GM12878 (cell line): ENCODE measurements at regions of chr15 and their contacts with region 1.

Region 1: GRCh38 chr15:98954411-98954810 is 53.2 kb downstream of the PGPEP1L start:
- DNase-seq: peak; percentile 24
- ATAC-seq: no peak
- H3K4me3 ChIP-seq: no peak overlapping the region
- H3K27ac ChIP-seq: no peak overlapping the region
- H3K4me1 ChIP-seq: peaks cover 25% of the 10 kb centered on the region
- H3K27me3 ChIP-seq: no peaks in the 10 kb centered on the region
- CTCF ChIP-seq: no peak
- EP300 ChIP-seq: no peak
- POLR2A ChIP-seq: no peak
- RAD21 ChIP-seq: no peak

Region 2: GRCh38 chr15:98937413-98938104 is 16.9 kb before region 1 on chr15:
- CTCF ChIA-PET with region 1: interaction called, 12 read pairs
- POLR2A ChIA-PET with region 1: interaction called, 11 read pairs
- RAD21 ChIA-PET with region 1: interaction called, 33 read pairs
- SMC1A ChIA-PET with region 1: interaction called, 59 read pairs
- in situ Hi-C with region 1: no loop called
- intact Hi-C with region 1: loop called (anchors 1 kb)
- DNase-seq: peak; percentile 44
- ATAC-seq: peak; percentile 88
- H3K4me3 ChIP-seq: no peak overlapping the region; the same call in 1 of the 2 replicates
- H3K27ac ChIP-seq: peak overlapping the region; percentile 35
- H3K4me1 ChIP-seq: peaks cover 19% of the 10 kb centered on the region
- H3K27me3 ChIP-seq: no peaks in the 10 kb centered on the region
- CTCF ChIP-seq: no peak
- EP300 ChIP-seq: peak; percentile 28 to 47; a peak in 1 of 4 replicates
- POLR2A ChIP-seq: no peak
- RAD21 ChIP-seq: no peak

Region 3: DNA sequence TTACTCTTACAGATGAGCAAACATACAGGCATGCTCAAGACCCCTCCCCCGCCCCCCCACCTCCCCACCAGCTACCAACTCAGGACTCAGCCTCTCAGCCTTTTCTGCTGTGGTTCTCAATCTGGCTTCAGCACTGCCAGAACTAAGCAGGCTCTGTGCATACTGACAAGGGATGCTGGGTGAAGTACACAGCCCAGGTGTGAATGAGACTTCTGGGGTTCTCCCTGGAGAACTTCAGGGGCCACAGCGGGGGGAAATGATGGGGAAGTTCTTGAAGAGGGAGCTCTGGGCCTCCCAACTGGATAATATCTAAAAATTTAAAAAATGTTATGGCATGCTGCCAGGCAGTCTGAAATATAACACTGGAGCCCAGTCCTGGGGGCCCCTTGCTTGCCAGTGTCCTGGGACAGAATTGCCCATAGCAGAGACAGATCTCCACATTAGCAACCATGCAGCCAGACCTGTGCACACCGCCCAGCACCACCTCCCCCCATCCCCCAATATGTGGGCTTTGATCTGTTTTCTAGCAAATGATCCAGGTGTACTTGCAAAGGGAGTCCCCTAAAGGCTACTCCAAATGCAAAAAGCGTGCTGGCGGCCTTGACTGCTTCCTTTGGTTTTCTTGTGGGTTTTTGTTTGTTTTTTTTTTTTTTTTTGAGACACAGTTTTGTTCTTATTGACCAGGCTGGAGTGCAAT is 11.8 kb after region 1 on chr15:
- CTCF ChIA-PET with region 1: interaction called, 3 read pairs
- POLR2A ChIA-PET with region 1: no interaction called
- RAD21 ChIA-PET with region 1: interaction called, 4 read pairs
- SMC1A ChIA-PET with region 1: interaction called, 10 read pairs
- in situ Hi-C with region 1: no loop called
- intact Hi-C with region 1: no loop called
- DNase-seq: no peak
- ATAC-seq: no peak
- H3K4me3 ChIP-seq: no peak overlapping the region
- H3K27ac ChIP-seq: no peak overlapping the region
- H3K4me1 ChIP-seq: no peaks in the 10 kb centered on the region
- H3K27me3 ChIP-seq: no peaks in the 10 kb centered on the region
- CTCF ChIP-seq: no peak
- EP300 ChIP-seq: no peak
- POLR2A ChIP-seq: no peak
- RAD21 ChIP-seq: no peak

Region 4: GRCh38 chr15:99014803-99015676 is 60.6 kb after region 1 on chr15:
- CTCF ChIA-PET with region 1: interaction called, 5 read pairs
- POLR2A ChIA-PET with region 1: interaction called, 3 read pairs
- RAD21 ChIA-PET with region 1: interaction called, 8 read pairs
- SMC1A ChIA-PET with region 1: interaction called, 12 read pairs
- in situ Hi-C with region 1: no loop called
- intact Hi-C with region 1: loop called (anchors 1 kb)
- DNase-seq: no peak
- ATAC-seq: peak; percentile 91
- H3K4me3 ChIP-seq: peak overlapping the region; percentile 68
- H3K27ac ChIP-seq: peak overlapping the region; percentile 89
- H3K4me1 ChIP-seq: no peaks in the 10 kb centered on the region; the same call in 1 of the 2 replicates
- H3K27me3 ChIP-seq: no peaks in the 10 kb centered on the region
- CTCF ChIP-seq: no peak
- EP300 ChIP-seq: no peak
- POLR2A ChIP-seq: peak; percentile 45
- RAD21 ChIP-seq: no peak

Region 5: DNA sequence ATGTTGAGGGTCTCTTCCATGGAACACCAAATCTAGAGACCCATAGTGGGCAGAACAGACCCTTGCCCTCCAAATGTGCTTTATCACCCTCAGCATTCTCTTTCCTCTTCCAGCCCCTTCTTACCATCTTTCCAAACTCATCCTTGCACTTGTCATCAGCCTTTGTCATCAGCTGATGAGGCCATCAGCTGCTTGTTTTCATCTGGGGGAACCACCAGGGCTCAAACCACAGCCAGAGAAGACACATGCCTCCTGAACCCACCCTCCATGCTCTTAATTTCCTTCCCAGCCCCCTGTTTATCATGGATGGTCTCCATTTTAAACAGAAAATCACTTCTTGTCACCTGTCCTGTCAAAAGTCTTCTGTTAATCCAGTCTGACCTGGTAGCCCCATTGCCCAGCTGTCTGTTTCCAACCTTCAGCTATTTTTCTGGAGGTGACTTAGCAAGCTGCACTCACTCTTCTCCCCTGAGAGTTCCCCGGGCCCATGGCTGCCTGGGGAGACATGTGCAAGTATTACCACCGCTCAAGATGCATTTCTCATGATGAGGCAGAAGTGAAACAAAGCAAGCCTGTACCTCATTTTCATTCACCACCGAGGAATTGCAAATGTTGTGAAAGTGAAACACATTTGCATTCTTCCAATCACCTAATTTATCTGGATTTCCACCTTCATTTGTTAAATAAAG is 135.7 kb after region 1 on chr15:
- CTCF ChIA-PET with region 1: no interaction called
- POLR2A ChIA-PET with region 1: no interaction called
- RAD21 ChIA-PET with region 1: interaction called, 4 read pairs
- SMC1A ChIA-PET with region 1: interaction called, 16 read pairs
- in situ Hi-C with region 1: no loop called
- intact Hi-C with region 1: loop called (anchors 1 kb)
- DNase-seq: peak; percentile 90
- ATAC-seq: peak; percentile 100
- H3K4me3 ChIP-seq: peak overlapping the region; percentile 9; the same call in 1 of the 2 replicates
- H3K27ac ChIP-seq: peak overlapping the region; percentile 70
- H3K4me1 ChIP-seq: peaks cover 18% of the 10 kb centered on the region
- H3K27me3 ChIP-seq: no peaks in the 10 kb centered on the region
- CTCF ChIP-seq: no peak
- EP300 ChIP-seq: peak; percentile 74 to 83; a peak in 3 of 4 replicates
- POLR2A ChIP-seq: no peak
- RAD21 ChIP-seq: no peak